ENCODE measurements at regions of chr10 and their contacts with region 1.

Region 1: DNA sequence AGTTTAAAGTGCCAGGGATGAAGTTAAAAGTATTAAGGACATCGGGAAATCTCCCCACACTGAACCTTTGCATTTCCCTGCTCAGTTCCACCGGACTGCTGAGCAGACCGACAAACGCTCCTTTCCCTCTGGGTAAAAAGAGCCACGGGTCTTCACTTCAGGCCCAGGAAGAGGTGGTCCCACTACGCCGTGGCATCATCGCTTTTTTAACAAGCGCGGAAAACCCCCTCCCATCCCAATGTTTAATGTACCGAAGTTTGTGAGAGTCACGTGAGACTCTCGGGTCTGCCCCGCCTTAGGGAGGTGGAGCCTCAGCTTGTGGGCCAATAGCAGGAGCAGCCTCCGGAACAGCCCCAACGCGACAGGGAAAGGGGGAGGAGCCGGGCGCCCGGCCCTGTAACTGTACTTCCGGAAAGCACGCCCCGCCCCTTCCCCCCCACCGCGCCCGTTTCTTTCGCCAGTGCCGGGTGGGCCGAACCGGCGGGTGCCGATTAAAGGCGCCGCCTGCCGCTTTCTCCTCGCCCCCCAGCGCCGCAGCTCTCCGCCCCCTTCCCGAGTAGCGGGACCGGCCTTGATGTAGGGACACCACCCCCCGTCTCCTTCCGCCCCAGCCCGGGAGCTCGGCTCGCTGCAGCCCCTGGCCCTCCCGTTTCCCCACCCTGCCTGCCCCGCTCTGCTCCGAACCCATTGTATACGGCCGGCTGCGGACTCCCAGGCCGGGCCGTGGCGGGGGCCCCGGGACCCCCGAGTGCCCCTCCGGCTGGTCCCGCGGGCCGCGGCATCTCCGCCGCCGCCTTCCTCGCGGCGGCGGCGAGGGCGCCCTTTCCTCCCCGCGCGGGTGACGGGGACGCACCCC is 2.2 kb upstream of the TRIM8 start:
- DNase-seq: peak; percentile 99

Region 2: GRCh38 chr10:102503281-102504220 is 138.6 kb before region 1 on chr10 and contains the start of gene SUFU:
- intact Hi-C with region 1: loop called in 1 of 2 experiments (anchors 10 kb)
- DNase-seq: peak; percentile 98
- total RNA-seq, gene SUFU: 10.4 to 11.3 TPM